ENCODE measurements at regions of chr1 and their contacts with region 1.

Region 1: DNA sequence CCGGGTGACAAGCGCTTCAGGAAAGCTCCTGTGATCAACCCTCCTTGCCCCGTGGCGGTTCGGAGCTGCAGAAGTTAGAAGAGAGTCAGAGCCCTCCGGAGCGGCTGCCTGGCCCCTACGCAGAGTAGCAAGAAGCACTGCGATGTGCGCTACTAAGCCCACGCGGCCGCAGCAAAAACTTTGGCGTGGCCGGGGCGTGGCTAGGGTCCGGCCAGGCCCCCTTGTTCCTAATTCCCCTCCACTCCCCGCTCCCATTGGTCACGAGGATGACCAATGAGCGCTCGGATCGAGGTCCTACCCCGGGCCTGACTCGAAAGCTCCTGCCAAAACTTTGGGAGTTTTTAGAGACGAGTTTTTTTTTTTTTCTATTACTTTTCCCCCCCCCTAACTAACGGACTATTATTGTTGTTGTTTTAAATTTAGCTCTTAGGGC is at the start of gene HLX:
- DNase-seq: peak; percentile 75
- ATAC-seq: peak; percentile 80
- H3K4me3 Mint-ChIP-seq: peak within 1 kb of the TSS; percentile 94
- H3K27ac Mint-ChIP-seq: peak within 1 kb of the TSS; percentile 93
- H3K4me1 Mint-ChIP-seq: peaks cover 50% of the 10 kb centered on the region
- H3K27me3 Mint-ChIP-seq: peaks cover 2% of the 10 kb centered on the region
- CTCF ChIP-seq: no peak
- total RNA-seq, gene HLX: 3.2 and 4.6 TPM in 2 replicates

Region 2: DNA sequence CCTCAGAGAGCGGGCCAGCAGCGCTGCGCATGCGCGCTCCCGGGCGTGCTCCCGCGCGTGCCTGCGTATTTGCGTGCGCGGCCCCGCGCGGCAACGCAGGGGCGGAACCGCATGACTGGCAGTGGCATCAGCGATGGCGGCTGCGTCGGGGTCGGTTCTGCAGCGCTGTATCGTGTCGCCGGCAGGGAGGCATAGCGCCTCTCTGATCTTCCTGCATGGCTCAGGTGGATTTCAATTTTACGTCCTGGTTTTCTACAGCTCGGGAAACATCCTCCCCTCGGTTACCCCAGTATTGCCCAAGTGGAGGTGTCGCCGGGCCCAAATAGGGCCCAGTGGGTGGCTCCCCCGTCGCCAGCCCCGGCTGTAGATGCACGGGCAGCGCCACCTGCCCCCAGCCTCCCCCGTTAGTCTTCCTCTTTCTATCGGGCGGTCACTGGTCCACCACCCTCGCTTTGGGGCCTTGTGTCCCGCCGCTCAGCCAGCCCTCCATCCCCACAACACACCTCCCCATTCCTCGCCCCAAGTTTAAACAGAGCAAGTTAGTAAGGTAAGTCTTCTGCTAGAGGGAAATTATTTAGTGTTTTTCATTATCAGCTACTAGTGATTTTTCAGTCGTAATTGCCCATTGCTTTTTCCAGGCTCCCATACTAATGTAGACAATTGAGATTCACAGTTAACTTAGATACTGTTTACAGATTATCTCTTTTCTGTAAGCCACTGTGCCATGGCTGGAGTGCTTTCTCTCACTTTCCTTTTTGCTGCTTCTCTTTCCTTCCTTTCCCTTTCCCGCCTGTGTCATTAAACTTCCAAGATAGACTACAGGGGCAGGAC is 1705.1 kb before region 1 on chr1 and contains the start of gene LYPLAL1:
- CTCF ChIA-PET with region 1: no interaction called
- POLR2A ChIA-PET with region 1: interaction called, 3 read pairs
- intact Hi-C with region 1: loop called (anchors 10 kb)
- DNase-seq: peak; percentile 91
- ATAC-seq: peak; percentile 86
- H3K4me3 Mint-ChIP-seq: peak within 1 kb of the TSS; percentile 98
- H3K27ac Mint-ChIP-seq: peak within 1 kb of the TSS; percentile 98
- H3K4me1 Mint-ChIP-seq: peaks cover 55% of the 10 kb centered on the region
- H3K27me3 Mint-ChIP-seq: no peaks in the 10 kb centered on the region
- CTCF ChIP-seq: no peak
- total RNA-seq, gene LYPLAL1: 38.0 and 42.3 TPM in 2 replicates

Region 3: DNA sequence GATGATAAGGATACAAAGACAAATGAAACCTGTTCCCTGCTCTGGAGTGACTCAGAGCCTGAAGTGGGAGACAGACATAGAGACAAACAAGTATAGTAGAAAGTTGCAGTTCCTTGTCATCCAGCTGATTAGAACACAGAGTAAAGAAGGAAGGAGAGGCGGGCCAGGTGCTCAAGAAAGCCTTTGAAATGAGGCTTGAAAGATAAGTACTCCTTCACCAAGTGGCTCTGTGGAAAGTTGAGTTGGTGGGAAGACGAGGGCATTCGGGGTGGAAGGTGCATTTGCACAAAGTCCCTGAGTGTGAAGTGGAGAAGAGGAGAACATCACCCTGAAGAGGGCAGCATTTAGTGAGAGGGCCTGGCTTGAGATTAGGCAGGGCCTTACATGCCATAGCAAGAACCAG is 334.2 kb before region 1 on chr1:
- CTCF ChIA-PET with region 1: no interaction called
- POLR2A ChIA-PET with region 1: no interaction called
- intact Hi-C with region 1: no loop called
- DNase-seq: no peak
- ATAC-seq: no peak
- H3K4me3 Mint-ChIP-seq: no peak overlapping the region
- H3K27ac Mint-ChIP-seq: no peak overlapping the region
- H3K4me1 Mint-ChIP-seq: no peaks in the 10 kb centered on the region
- H3K27me3 Mint-ChIP-seq: peaks cover 10% of the 10 kb centered on the region
- CTCF ChIP-seq: no peak

Region 4: DNA sequence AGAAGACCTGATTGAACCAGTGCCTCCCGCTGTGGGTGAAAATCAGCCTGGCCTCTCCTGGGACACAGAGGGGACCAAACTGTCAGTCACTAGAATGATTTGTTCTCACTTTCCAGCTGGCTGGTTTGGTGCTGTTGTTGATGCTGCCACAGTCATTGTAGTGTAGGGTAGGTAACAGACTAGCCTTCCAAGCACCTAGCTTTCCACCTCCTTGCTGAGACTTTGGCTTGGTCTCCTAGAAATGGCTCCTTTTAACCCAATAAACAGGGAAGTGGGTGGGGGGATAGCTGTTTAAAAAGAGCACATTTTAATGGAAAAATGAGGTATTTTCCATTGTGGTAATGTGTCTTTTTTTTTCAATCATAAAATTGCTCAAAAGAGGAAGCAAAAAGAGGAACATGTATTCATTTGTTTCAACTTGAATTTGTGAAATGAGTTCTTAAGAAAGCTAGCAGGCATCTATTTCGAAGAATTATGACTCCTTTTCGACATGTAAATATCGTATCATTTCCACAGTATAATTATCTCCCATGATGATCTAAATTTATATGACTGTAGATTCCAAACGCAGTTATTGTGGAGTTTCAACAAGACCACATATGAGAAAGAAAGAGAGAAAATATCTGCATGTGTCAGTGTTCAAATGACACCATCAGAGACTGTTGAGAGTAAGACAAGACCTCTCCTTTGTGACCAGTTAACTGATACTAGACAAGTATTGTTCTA is 190.2 kb after region 1 on chr1:
- CTCF ChIA-PET with region 1: interaction called, 3 read pairs
- POLR2A ChIA-PET with region 1: interaction called, 66 read pairs
- intact Hi-C with region 1: loop called (anchors 1 kb)
- DNase-seq: peak; percentile 59
- ATAC-seq: peak; percentile 83
- H3K4me3 Mint-ChIP-seq: peak overlapping the region; percentile 75
- H3K27ac Mint-ChIP-seq: peak overlapping the region; percentile 99
- H3K4me1 Mint-ChIP-seq: peaks cover 85% of the 10 kb centered on the region
- H3K27me3 Mint-ChIP-seq: no peaks in the 10 kb centered on the region
- CTCF ChIP-seq: no peak

Region 5: DNA sequence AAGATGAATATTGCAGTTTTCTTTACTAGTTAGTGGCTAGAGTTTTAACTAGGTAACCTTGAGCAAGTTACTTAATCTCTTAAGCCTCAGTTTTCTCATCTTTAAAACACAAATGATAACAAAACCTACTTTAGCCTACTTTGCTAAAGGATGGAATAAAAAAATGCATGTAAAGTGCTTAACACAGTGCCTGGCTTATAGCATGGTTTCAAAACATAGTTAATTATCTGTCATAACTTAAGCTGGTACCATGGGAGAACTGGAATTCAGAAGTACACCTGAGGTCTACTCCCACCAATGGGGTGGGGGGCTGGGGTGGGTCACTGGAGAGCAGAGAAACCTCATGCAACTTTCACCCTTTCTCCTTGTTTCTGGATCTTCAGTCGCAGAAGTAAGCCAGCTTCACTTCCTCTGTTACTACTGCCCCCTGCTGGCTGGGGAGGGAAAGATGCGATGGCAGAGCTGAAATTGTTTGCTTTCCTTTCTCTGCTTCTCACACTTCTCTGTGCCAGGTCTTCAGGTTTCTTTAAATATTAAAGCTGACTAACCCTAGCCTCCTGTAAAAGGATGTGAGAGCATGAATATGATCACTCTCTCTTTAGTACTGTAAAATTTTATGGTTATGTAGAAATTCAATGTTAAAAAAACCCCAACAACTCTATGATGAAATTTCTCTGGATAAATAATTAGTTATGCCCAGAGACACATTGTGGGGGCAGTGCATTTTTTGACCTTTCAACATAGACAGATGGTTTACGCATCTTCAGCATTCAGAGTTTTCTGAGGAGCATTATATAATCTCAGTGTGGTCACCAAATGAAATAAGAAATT is 324.3 kb after region 1 on chr1:
- CTCF ChIA-PET with region 1: interaction called, 175 read pairs
- POLR2A ChIA-PET with region 1: interaction called, 23 read pairs
- intact Hi-C with region 1: loop called (anchors 1 kb)
- DNase-seq: peak; percentile 59
- ATAC-seq: peak; percentile 45
- H3K4me3 Mint-ChIP-seq: no peak overlapping the region
- H3K27ac Mint-ChIP-seq: no peak overlapping the region
- H3K4me1 Mint-ChIP-seq: peaks cover 3% of the 10 kb centered on the region
- H3K27me3 Mint-ChIP-seq: peaks cover 7% of the 10 kb centered on the region
- CTCF ChIP-seq: no peak

Region 6: GRCh38 chr1:222643938-222644635 is 1765.0 kb after region 1 on chr1:
- CTCF ChIA-PET with region 1: no interaction called
- POLR2A ChIA-PET with region 1: interaction called, 8 read pairs
- intact Hi-C with region 1: loop called (anchors 5 kb)
- DNase-seq: peak; percentile 94
- ATAC-seq: peak; percentile 96
- H3K4me3 Mint-ChIP-seq: peak overlapping the region; percentile 100
- H3K27ac Mint-ChIP-seq: peak overlapping the region; percentile 99
- H3K4me1 Mint-ChIP-seq: peaks cover 25% of the 10 kb centered on the region
- H3K27me3 Mint-ChIP-seq: no peaks in the 10 kb centered on the region
- CTCF ChIP-seq: no peak